ENCODE measurements at regions of chr5 and their contacts with region 1.

Region 1: GRCh38 chr5:132293066-132293991 is 865 bp upstream of the SLC22A4 start:
- DNase-seq: peak; percentile 89
- H3K4me3 ChIP-seq: peak overlapping the region; percentile 37 to 70 (median 53)
- H3K27ac ChIP-seq: peak overlapping the region; percentile 93
- H3K4me1 ChIP-seq: peaks cover 25% of the 10 kb centered on the region
- H3K27me3 ChIP-seq: no peaks in the 10 kb centered on the region
- CTCF ChIP-seq: peak in 1 of 2 donors; percentile 40
- POLR2A ChIP-seq: no peak

Region 2: DNA sequence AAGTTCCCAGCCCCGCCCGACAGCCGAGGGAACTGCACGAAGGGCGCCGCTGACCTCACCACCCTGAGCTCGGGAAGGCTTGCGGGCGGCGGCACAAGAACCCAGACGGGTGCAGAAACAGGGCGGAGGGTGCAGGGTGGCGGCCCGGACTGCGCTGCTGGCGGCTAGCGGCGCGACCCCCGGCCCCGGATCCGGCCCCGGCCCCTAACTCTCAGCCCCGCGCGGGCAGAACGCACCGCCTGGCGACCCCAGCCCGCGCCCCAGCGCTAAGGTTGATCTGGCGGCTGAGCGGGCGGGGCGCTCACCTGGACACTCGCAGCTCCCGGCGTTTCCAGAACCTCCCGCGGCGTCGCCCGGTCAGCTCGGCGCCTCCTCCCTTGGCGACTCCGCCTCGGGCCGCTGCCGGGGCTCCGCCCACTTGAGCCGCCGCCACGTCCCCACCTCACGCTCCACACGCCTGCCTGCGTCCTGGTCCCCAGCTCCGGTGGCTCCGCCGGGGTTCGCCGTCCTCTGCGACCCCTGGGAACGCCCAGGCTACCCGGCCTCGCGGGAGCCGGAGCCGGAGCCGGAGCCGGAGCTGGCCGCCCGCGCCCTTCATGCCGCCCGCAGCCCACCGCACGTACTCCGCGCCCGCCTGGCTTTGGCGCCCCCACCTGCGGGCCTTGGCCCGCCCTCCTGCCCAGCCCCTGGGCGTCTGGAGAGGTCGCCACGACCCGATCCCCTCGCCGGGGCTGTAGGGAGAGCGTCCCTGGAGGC is 65.7 kb before region 1 on chr5 and contains the start of gene P4HA2:
- CTCF ChIA-PET with region 1: no interaction called
- POLR2A ChIA-PET with region 1: no interaction called
- dilution Hi-C with region 1: no loop called
- intact Hi-C with region 1: loop called (anchors 1 kb)
- DNase-seq: peak; percentile 71
- H3K4me3 ChIP-seq: peak within 1 kb of the TSS; percentile 44 to 61 (median 46)
- H3K27ac ChIP-seq: peak within 1 kb of the TSS; percentile 28
- H3K4me1 ChIP-seq: no peaks in the 10 kb centered on the region
- H3K27me3 ChIP-seq: peaks cover 0 to 1% of the 10 kb centered on the region in 2 experiments
- CTCF ChIP-seq: no peak
- POLR2A ChIP-seq: peak; percentile 56
- total RNA-seq, gene P4HA2: 37.4 and 37.6 TPM in 2 replicates

Region 3: DNA sequence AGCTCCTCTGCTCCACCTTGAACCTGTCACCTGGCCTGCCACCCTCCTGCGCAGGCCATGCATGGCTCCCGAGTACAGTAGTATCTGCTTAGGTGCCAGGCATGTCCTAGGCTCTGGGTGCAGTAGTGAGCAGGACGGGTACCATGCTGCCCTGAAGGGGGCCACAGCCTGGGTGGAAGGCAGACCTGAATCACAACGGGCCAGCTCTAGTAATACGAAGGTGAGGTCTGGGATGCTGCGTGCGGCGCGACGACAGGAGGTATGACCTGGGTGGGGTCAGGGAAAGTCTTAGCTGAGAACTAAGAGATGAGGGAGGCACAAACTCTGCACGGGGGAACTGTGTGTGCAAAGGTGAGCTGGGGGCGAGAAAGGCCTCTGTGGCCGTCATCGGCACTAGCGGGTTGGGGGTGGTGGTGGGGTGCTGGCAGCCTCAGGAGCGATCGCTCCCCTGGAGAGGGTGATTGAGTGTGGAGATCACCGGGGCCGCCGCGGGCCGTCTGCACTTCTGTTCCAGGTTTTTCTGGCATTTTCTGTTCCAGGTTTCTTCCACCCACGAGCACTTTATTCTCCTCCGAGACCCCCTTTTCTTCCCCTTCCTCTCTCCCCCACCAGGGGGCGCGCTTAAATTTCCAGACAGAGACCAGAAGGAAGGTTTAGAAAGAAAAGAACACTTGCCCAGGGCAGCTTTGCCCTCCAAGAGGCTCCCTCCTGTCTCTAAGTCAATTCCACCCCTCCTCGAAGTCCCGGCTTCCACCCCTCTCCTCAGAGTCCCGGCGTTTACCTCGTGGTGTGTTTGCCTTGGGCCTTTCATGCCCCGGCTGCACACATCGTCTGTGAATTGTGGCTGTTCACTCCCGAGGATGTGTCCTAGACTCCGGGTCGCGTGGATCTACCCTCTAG is 20.8 kb before region 1 on chr5:
- CTCF ChIA-PET with region 1: interaction called, 23 read pairs
- POLR2A ChIA-PET with region 1: no interaction called
- dilution Hi-C with region 1: no loop called
- intact Hi-C with region 1: loop called (anchors 1 kb)
- DNase-seq: peak; percentile 70
- H3K4me3 ChIP-seq: no peak overlapping the region
- H3K27ac ChIP-seq: no peak overlapping the region
- H3K4me1 ChIP-seq: no peaks in the 10 kb centered on the region
- H3K27me3 ChIP-seq: no peaks in the 10 kb centered on the region
- CTCF ChIP-seq: peak; percentile 79 to 81
- POLR2A ChIP-seq: peak; percentile 36

Region 4: GRCh38 chr5:132369474-132370180 is 76.3 kb after region 1 on chr5 and contains the start of gene SLC22A5:
- CTCF ChIA-PET with region 1: interaction called, 23 read pairs
- POLR2A ChIA-PET with region 1: interaction called, 7 read pairs
- dilution Hi-C with region 1: no loop called
- intact Hi-C with region 1: loop called (anchors 1 kb)
- DNase-seq: peak; percentile 70
- H3K4me3 ChIP-seq: peak within 1 kb of the TSS; percentile 59 to 61 (median 61)
- H3K27ac ChIP-seq: peak within 1 kb of the TSS; percentile 2
- H3K4me1 ChIP-seq: peaks cover 5% of the 10 kb centered on the region
- H3K27me3 ChIP-seq: no peaks in the 10 kb centered on the region
- CTCF ChIP-seq: no peak
- POLR2A ChIP-seq: peak; percentile 28
- total RNA-seq, gene SLC22A5: 3.6 and 3.8 TPM in 2 replicates

Measured in endothelial cell of umbilical vein (primary cell).